ENCODE measurements at regions of chr20 and their contacts with region 1.

Region 1: DNA sequence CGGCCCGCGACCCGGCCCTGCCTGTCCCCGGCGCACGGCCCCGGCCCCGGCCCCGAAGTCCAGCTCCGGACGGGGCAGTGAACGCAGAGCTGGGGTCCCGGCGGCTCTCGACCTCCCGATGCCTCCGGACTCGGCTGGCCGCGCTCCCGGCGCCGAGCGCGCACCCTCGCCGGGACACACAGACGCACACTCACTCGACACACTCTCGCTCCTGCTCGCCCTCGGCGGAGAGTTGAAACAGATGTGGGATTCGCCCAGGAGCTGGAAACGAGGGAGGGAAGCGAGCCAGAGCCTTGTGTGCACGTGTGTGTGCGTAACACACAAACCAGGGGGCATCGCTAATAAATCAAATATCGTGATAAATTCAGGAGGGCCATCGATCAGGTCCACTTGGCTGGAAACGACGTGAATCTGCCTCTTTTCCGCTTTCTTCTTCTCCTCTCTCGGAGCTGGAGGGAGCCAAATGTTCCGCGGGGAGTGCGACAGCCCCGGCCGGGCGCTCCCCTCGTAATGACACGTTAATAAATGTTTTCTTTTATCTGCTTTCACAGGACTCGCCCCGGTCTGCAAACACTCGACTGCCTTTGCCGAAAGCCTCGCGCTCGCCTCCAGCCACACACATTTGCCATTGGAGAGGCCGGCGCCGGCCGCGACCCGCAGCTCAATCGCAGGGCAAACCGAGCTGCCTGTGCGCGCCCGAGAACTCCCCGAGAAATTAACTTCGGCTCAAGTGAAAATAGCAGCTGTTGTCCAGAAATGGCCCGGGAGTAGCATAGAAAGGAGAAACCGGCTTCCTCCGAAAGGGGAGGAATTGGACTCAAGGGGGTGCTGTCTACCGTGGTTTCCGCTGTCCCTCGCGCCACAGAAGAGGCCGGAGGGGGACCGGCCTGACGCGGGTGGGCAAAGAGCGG is 828 bp upstream of the SULF2 start:
- DNase-seq: peak; percentile 79 to 85
- H3K4me3 ChIP-seq: peak overlapping the region; percentile 44 to 80
- H3K27ac ChIP-seq: peak overlapping the region; percentile 88 to 97
- H3K4me1 ChIP-seq: peaks cover 0 to 14% of the 10 kb centered on the region in 2 donors
- H3K27me3 ChIP-seq: no peaks in the 10 kb centered on the region
- CTCF ChIP-seq: peak; percentile 68 to 87 (median 77)
- POLR2A ChIP-seq: peak; percentile 20 to 46

Region 2: GRCh38 chr20:47677635-47678453 is 108.3 kb before region 1 on chr20:
- intact Hi-C with region 1: loop called (anchors 10 kb)
- DNase-seq: peak; percentile 47 to 59
- H3K4me3 ChIP-seq: no peak overlapping the region
- H3K27ac ChIP-seq: no peak overlapping the region
- H3K4me1 ChIP-seq: peaks cover 2 to 12% of the 10 kb centered on the region in 2 donors
- H3K27me3 ChIP-seq: no peaks in the 10 kb centered on the region
- CTCF ChIP-seq: peak; percentile 69 to 83 (median 76)
- POLR2A ChIP-seq: no peak

Region 3: GRCh38 chr20:47704755-47705493 is 81.2 kb before region 1 on chr20:
- intact Hi-C with region 1: no loop called
- DNase-seq: peak; percentile 71 to 86
- H3K4me3 ChIP-seq: no peak overlapping the region
- H3K27ac ChIP-seq: peak overlapping the region; percentile 73 to 78
- H3K4me1 ChIP-seq: peaks cover 4 to 14% of the 10 kb centered on the region in 2 donors
- H3K27me3 ChIP-seq: no peaks in the 10 kb centered on the region
- CTCF ChIP-seq: peak in 1 of 4 experiments; percentile 7
- POLR2A ChIP-seq: no peak

Region 4: DNA sequence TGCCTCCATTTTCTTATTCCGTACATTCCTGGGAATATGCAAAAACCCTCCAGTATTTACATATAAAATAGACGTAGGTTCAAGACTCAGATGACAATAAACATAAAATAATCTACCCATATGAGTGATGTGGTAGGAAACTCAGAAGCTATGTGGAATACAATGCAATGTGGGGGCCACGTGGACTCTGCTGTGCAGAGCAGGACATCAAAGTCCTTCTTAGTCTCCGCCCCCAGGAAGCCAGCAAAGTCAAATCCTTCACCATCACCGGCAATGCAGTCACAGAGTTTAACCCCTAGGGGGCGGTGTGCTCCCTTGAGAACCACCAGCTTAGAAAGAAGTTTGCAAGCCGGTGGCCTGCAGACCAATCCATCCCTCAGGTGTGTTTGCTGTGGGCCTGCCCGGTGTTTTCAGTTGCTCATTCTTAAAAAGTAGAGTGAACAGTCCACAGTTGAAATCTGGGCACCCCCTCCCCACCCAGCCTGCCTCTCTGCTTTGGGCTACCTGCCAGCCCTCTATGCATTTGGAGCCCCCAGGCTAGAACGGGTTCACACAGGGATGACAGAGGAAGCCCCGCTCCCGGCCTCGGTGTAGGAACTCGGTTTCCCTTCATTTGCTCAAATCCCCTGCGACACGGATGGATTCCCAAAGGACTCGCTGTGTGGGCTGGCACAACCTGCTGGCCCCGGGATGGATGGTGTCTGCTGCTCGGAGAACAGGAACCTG is 60.7 kb before region 1 on chr20:
- intact Hi-C with region 1: loop called (anchors 5 kb)
- DNase-seq: peak; percentile 72 to 80
- H3K4me3 ChIP-seq: no peak overlapping the region
- H3K27ac ChIP-seq: no peak overlapping the region
- H3K4me1 ChIP-seq: no peaks in the 10 kb centered on the region
- H3K27me3 ChIP-seq: no peaks in the 10 kb centered on the region
- CTCF ChIP-seq: peak; percentile 82 to 89 (median 86)
- POLR2A ChIP-seq: no peak

Region 5: GRCh38 chr20:48295445-48295963 is 509.4 kb after region 1 on chr20:
- intact Hi-C with region 1: loop called (anchors 10 kb)
- DNase-seq: peak; percentile 49 to 64
- H3K4me3 ChIP-seq: no peak overlapping the region
- H3K27ac ChIP-seq: peak overlapping the region; percentile 36 to 71
- H3K4me1 ChIP-seq: peaks cover 5 to 6% of the 10 kb centered on the region in 2 donors
- H3K27me3 ChIP-seq: no peaks in the 10 kb centered on the region
- CTCF ChIP-seq: peak; percentile 27 to 56 (median 40)
- POLR2A ChIP-seq: no peak

Region 6: DNA sequence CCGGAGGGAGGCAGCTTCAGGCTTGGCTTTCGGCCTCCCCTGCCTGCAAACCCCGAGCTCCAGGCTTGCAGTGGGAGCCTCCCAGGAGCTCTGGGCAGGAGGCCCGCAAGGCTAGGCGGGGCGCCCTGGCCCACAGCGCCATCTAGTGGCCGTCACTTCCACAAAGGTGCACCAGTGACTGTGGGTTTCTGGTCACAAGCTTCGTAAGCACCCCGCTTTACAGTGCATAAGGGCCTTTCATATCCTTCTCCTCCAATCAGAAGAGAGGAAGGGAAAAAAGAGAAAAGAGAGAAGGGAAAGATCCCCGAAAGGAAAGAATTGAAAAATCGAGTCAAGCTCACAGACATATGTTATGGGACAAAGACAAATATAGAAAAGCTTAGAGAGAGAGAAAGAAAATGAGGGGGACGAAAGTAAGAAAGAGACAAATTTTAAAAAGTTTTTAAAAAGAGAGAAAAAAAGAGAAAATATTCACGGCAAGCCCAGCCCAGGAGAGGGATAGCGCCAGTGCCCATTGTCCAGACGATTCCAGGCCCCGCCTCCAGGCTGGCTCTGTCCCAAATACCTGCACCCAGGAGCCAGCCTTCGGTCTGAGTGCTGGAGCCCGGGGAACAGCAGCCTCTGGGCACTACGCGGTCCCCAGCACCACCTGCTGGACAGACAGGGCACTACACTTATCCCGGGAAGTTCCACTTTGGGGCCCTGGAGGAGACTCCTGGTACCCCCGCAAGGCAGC is 834.6 kb after region 1 on chr20:
- intact Hi-C with region 1: loop called (anchors 10 kb)
- DNase-seq: peak; percentile 90 to 93
- H3K4me3 ChIP-seq: peak overlapping the region in 1 of 2 donors; percentile 28
- H3K27ac ChIP-seq: peak overlapping the region in 1 of 2 donors; percentile 44
- H3K4me1 ChIP-seq: no peaks in the 10 kb centered on the region
- H3K27me3 ChIP-seq: no peaks in the 10 kb centered on the region
- CTCF ChIP-seq: peak; percentile 77 to 97 (median 96)
- POLR2A ChIP-seq: no peak

Measured in uterus (tissue), 4 donors.